Naive thymus-derived CD4-positive, alpha-beta T cell (primary cell): ENCODE measurements at regions of chr10 and their contacts with region 1.

Region 1: DNA sequence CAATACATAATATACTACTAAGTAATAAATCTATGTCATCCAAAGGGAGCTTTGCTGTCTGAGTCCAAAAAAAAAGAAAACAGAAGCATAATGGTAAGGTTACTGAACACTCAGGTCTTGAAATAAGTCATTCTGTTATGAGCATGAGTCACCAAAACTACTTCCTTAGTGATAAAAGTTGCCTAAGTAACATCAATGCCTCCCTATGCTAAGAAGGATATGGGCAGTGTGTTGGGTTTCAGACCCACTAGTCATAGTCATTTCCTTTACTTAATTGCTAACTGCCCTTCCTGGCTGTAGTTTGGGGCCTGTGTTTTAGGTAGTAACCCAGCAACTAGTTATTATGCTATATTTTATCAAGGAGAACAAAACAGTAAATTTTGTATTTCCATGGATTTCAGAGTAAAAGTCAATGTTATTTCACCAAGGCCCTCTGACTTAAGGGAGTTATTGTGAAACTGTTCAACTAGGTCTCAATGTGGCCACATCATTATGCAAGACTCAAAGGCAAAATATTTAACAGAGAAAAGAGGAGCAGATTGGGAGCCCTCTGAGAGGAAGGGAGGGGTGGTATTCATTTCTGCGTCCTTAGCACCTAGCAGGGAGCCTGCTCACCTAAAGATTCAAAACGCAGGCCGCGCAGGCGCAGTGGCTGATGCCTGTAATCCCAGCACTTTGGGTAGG is 11.7 kb upstream of the VIM start:
- DNase-seq: no peak
- ATAC-seq: peak; percentile 91
- H3K4me3 ChIP-seq: no peak overlapping the region
- H3K4me3 Mint-ChIP-seq: peak overlapping the region in 2 of 10 donors; percentile 36 to 39
- H3K27ac ChIP-seq: no peak overlapping the region
- H3K27ac Mint-ChIP-seq: peak overlapping the region in 5 of 9 donors; percentile 32 to 95 (median 50)
- H3K4me1 ChIP-seq: peaks cover 5 to 11% of the 10 kb centered on the region in 2 donors
- H3K4me1 Mint-ChIP-seq: peaks cover 0 to 47% (median 5%) of the 10 kb centered on the region in 7 donors
- H3K27me3 ChIP-seq: no peaks in the 10 kb centered on the region
- H3K27me3 Mint-ChIP-seq: no peaks in the 10 kb centered on the region

Region 2: DNA sequence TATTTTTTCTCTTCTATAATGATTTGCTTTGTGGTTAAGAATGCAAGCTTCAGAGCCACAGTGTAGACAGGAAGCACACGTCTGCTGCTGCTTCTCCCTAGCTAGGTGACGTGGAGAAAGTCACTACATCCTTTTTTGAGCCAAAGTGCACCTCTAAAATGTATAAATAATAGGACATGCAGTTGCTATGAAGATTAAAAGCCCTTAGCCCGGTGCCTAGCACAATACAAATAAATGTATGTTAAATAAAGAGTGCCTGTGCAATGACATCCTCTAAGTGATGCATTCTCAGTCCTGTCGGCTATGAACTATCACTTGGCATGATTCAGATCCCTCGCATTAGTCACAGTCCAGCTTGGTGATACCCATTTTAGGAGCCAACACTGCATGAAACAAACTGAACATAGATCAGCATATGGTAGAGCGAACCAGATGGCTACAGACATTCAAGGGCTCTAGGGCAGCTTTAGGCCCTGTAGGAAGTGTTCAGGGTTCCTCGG is 10.1 kb before region 1 on chr10:
- CTCF ChIA-PET with region 1: interaction called, 4 read pairs
- POLR2A ChIA-PET with region 1: interaction called, 8 read pairs
- intact Hi-C with region 1: loop called (anchors 1 kb)
- DNase-seq: peak in 8 of 9 donors; percentile 11 to 79 (median 71)
- ATAC-seq: peak; percentile 79
- H3K4me3 ChIP-seq: no peak overlapping the region
- H3K4me3 Mint-ChIP-seq: peak overlapping the region; percentile 55 to 78 (median 64)
- H3K27ac ChIP-seq: peak overlapping the region; percentile 79
- H3K27ac Mint-ChIP-seq: peak overlapping the region; percentile 88 to 99 (median 96)
- H3K4me1 ChIP-seq: peaks cover 17 to 23% of the 10 kb centered on the region in 2 donors
- H3K4me1 Mint-ChIP-seq: peaks cover 18 to 47% (median 43%) of the 10 kb centered on the region in 7 donors
- H3K27me3 ChIP-seq: no peaks in the 10 kb centered on the region
- H3K27me3 Mint-ChIP-seq: no peaks in the 10 kb centered on the region